AG04449 (cell line): ENCODE measurements at regions of chr7 and their contacts with region 1.

Region 1: DNA sequence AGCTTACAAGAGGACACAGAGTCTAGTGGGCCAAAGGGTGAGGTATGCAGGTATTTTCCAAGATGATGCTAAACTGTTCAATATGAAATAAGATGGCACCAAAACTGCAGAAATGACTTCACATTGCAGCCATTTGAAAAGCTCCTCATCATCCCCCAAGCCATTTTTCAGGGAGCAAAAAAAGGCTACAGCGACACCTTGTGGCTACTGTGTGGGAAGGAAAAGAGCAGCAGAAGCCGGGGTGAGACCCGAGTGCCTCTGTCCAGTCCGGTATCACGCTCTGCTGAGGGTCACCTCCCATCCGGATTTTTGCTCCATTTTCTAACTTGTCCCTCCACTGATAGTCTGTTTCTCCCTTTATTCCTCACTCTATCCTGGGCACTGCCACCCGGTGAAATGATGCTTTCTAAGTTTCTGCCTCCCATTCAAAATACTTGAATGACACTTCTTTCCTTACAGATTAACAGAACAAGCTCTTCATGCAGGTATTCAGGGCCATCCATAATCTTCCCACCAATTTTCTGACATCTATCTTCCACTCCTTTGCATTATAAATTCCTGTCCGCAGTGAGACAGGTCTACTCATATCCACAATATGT is 220.2 kb downstream of the DGKI start:
- DNase-seq: no peak
- H3K4me3 ChIP-seq: no peak overlapping the region
- CTCF ChIP-seq: peak; percentile 79

Region 2: GRCh38 chr7:137613006-137613405 is 13.6 kb before region 1 on chr7:
- CTCF ChIA-PET with region 1: interaction called, 70 read pairs
- POLR2A ChIA-PET with region 1: no interaction called
- DNase-seq: no peak
- H3K4me3 ChIP-seq: no peak overlapping the region
- CTCF ChIP-seq: no peak

Region 3: DNA sequence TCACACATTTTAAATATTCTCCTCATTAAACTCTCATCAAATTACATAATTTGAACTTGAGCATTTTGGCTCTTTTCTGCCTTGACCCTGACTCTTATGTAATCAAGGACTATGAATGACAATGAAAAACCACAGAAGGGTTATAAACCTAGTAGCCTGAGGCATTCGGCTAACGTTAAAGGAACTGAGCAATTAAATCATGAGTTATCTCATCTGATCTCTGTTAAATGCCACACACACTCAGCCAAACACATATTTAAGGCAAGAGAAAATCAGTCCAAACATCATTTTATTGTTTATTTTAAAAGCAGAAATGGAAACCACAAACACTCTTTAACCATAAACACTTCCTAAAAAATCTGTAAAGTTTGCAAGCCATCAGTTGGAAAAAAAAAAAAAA is 15.9 kb after region 1 on chr7:
- CTCF ChIA-PET with region 1: interaction called, 52 read pairs
- POLR2A ChIA-PET with region 1: no interaction called
- DNase-seq: peak; percentile 46
- H3K4me3 ChIP-seq: no peak overlapping the region
- CTCF ChIP-seq: no peak